CD14-positive monocyte (primary cell): ENCODE measurements at regions of chr1 and their contacts with region 1.

Region 1: GRCh38 chr1:156767101-156767878 is at the start of gene PRCC:
- DNase-seq: peak; percentile 97 to 99 (median 99)
- H3K4me3 ChIP-seq: peak within 1 kb of the TSS; percentile 74 to 95 (median 79)
- H3K4me3 Mint-ChIP-seq: no peak within 1 kb of the TSS
- H3K27ac ChIP-seq: peak within 1 kb of the TSS; percentile 93 to 97
- H3K27ac Mint-ChIP-seq: no peak within 1 kb of the TSS
- H3K4me1 ChIP-seq: peaks cover 31 to 37% of the 10 kb centered on the region in 2 donors
- H3K4me1 Mint-ChIP-seq: peaks cover 29% of the 10 kb centered on the region
- H3K27me3 ChIP-seq: no peaks in the 10 kb centered on the region
- H3K27me3 Mint-ChIP-seq: peaks cover 0 to 2% (median 0%) of the 10 kb centered on the region in 3 donors
- CTCF ChIP-seq: no peak
- polyA plus RNA-seq, gene PRCC: 26.7 to 37.1 (median 29.6) TPM

Region 2: GRCh38 chr1:156728597-156729462 is 38.5 kb before region 1 on chr1 and contains the start of gene ISG20L2:
- intact Hi-C with region 1: loop called (anchors 1 to 5 kb)
- DNase-seq: peak; percentile 99 to 100 (median 100)
- H3K4me3 ChIP-seq: peak within 1 kb of the TSS; percentile 64 to 94 (median 89)
- H3K4me3 Mint-ChIP-seq: peak within 1 kb of the TSS; percentile 93 to 97
- H3K27ac ChIP-seq: peak within 1 kb of the TSS; percentile 69 to 98
- H3K27ac Mint-ChIP-seq: peak within 1 kb of the TSS in 5 of 7 donors; percentile 72 to 98 (median 98)
- H3K4me1 ChIP-seq: peaks cover 38 to 45% of the 10 kb centered on the region in 2 donors
- H3K4me1 Mint-ChIP-seq: peaks cover 18% of the 10 kb centered on the region
- H3K27me3 ChIP-seq: no peaks in the 10 kb centered on the region
- H3K27me3 Mint-ChIP-seq: no peaks in the 10 kb centered on the region
- CTCF ChIP-seq: no peak
- polyA plus RNA-seq, gene ISG20L2: 17.2 to 23.5 (median 18.1) TPM

Region 3: DNA sequence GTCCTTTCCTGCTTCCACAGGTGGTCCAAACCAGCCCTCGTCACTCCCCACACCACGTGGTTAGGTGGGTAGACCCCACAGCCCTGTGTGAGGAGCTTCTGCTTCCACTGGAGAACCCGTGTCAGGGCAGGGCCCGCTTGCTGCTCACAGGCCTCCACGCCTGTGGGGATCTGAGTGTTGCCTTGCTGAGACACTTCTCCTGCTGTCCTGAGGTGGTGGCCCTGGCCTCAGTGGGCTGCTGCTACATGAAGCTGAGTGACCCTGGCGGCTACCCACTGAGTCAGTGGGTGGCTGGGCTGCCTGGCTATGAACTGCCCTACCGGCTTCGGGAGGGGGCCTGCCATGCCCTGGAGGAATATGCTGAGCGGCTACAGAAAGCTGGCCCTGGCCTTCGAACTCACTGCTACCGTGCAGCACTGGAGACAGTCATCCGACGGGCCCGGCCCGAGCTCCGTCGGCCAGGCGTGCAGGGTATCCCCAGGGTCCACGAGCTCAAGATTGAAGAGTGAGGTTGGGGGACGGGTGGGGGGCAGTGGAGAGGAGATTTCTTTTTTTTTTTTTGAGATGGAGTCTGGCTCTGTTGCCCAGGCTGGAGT is 33.2 kb before region 1 on chr1:
- intact Hi-C with region 1: loop called in 1 of 2 experiments (anchors 5 kb)
- DNase-seq: no peak
- H3K4me3 ChIP-seq: no peak overlapping the region
- H3K4me3 Mint-ChIP-seq: no peak overlapping the region
- H3K27ac ChIP-seq: no peak overlapping the region
- H3K27ac Mint-ChIP-seq: peak overlapping the region in 2 of 7 donors; percentile 19 to 82
- H3K4me1 ChIP-seq: peaks cover 6 to 9% of the 10 kb centered on the region in 2 donors
- H3K4me1 Mint-ChIP-seq: peaks cover 13% of the 10 kb centered on the region
- H3K27me3 ChIP-seq: no peaks in the 10 kb centered on the region
- H3K27me3 Mint-ChIP-seq: peaks cover 0 to 1% (median 0%) of the 10 kb centered on the region in 3 donors
- CTCF ChIP-seq: no peak

Region 4: GRCh38 chr1:156740679-156741612 is 26.3 kb before region 1 on chr1 and contains the start of gene MRPL24:
- intact Hi-C with region 1: loop called (anchors 1 kb)
- DNase-seq: peak; percentile 98 to 99 (median 99)
- H3K4me3 ChIP-seq: peak within 1 kb of the TSS; percentile 44 to 93 (median 64)
- H3K4me3 Mint-ChIP-seq: peak within 1 kb of the TSS; percentile 95 to 97
- H3K27ac ChIP-seq: peak within 1 kb of the TSS; percentile 72 to 83
- H3K27ac Mint-ChIP-seq: peak within 1 kb of the TSS; percentile 89 to 97 (median 96)
- H3K4me1 ChIP-seq: peaks cover 21 to 31% of the 10 kb centered on the region in 2 donors
- H3K4me1 Mint-ChIP-seq: peaks cover 25% of the 10 kb centered on the region
- H3K27me3 ChIP-seq: no peaks in the 10 kb centered on the region
- H3K27me3 Mint-ChIP-seq: peaks cover 0 to 2% (median 1%) of the 10 kb centered on the region in 3 donors
- CTCF ChIP-seq: no peak
- polyA plus RNA-seq, gene MRPL24: 28.7 to 47.0 (median 38.4) TPM

Region 5: DNA sequence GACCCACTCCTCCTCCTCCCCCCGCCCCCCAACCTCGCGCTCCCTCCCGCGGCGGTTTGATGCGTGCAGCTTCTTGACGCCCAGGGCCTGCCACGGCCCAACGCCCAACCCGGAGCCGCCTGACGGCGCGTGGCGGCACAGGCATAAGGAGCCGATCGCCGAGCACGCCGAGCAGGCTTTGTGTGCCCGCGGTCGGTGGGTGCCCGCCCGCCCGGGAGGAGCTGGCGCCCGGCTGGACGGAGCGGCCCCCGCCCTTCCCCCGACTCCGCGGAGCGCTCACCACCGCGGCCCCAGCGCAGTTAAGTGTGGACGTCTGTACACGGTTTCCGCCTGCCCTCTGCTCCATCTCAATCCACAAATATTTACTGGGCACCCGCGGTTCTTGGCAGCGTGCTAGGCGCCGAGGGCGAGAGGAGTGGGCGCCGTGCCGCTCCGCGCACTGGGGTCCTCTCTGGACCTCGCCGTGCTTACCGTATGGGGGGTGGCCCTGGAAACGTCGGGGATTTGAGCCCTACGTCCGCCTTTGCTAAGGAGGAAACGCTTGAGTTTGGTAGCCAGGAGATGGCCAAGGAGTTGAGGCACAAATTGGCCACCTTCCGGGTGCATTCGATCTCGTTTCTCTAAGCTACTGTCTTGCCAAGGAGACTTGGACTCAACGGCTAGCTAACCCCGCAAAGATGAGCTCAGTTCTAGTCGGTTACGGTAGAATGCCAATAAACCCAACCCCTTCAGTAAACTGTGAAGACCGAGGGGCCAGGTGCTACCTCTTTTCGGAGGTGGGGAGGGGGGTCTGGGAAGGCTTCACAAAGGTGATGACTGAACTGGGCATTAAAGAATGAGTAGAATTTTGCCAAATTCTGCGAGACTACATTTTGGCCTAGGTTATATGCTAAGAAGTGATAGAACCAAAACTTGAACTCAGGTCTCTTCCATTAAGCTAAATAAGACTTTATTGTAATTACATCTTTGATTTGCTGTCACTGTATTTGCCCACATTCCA is 15.2 kb before region 1 on chr1:
- intact Hi-C with region 1: loop called (anchors 2 kb)
- DNase-seq: peak; percentile 90 to 94 (median 94)
- H3K4me3 ChIP-seq: peak overlapping the region; percentile 84 to 96 (median 84)
- H3K4me3 Mint-ChIP-seq: peak overlapping the region; percentile 89 to 95
- H3K27ac ChIP-seq: peak overlapping the region; percentile 82 to 88
- H3K27ac Mint-ChIP-seq: peak overlapping the region; percentile 90 to 94 (median 92)
- H3K4me1 ChIP-seq: peaks cover 49 to 63% of the 10 kb centered on the region in 2 donors
- H3K4me1 Mint-ChIP-seq: peaks cover 64% of the 10 kb centered on the region
- H3K27me3 ChIP-seq: no peaks in the 10 kb centered on the region
- H3K27me3 Mint-ChIP-seq: peaks cover 0 to 2% (median 0%) of the 10 kb centered on the region in 3 donors
- CTCF ChIP-seq: no peak